HepG2 (cell line): ENCODE measurements at regions of chr17 and their contacts with region 1.

Region 1: DNA sequence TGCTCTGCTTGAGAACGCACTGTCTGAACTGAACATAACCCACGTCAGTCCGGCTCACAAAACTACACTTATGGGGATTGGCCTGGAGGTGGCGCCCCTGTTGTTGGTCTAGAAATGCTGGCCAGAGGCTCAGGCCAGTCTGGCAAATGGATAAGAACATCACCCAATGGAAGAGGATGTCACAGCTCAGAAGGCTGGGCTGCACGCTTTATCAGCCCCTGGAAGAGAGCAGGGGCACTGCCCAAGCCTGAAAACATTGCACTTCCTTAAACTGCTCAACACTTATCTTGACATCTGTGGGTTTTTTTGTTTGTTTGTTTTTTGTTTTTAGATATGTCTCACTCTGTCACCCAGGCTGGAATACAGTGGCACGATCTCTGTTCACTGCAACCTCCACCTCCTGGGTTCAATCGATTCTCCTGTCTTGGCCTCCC is 24.8 kb upstream of the BPTF start:
- DNase-seq: peak; percentile 83
- ATAC-seq: peak; percentile 96
- H3K4me3 ChIP-seq: no peak overlapping the region
- H3K27ac ChIP-seq: no peak overlapping the region
- H3K4me1 ChIP-seq: peaks cover 28% of the 10 kb centered on the region
- H3K27me3 ChIP-seq: peaks cover 3 to 11% of the 10 kb centered on the region in 2 experiments; a peak in 3 of 5 replicates
- CTCF ChIP-seq: peak; percentile 95
- EP300 ChIP-seq: no peak
- POLR2A ChIP-seq: no peak
- RAD21 ChIP-seq: peak; percentile 87

Region 2: GRCh38 chr17:67862614-67863217 is 62.2 kb after region 1 on chr17:
- CTCF ChIA-PET with region 1: interaction called, 6 read pairs
- POLR2A ChIA-PET with region 1: no interaction called
- in situ Hi-C with region 1: no loop called
- intact Hi-C with region 1: loop called (anchors 2 kb)
- DNase-seq: no peak
- ATAC-seq: no peak
- H3K4me3 ChIP-seq: no peak overlapping the region
- H3K27ac ChIP-seq: no peak overlapping the region
- H3K4me1 ChIP-seq: peaks cover 10% of the 10 kb centered on the region; the same call in 1 of the 2 replicates
- H3K27me3 ChIP-seq: no peaks in the 10 kb centered on the region
- CTCF ChIP-seq: no peak
- EP300 ChIP-seq: no peak
- POLR2A ChIP-seq: no peak
- RAD21 ChIP-seq: no peak